GM12878 (cell line): ENCODE measurements at regions of chr11 and their contacts with region 1.

Region 1: GRCh38 chr11:72951193-72951592 is 137.0 kb downstream of the ATG16L2 start:
- DNase-seq: no peak
- ATAC-seq: no peak
- H3K4me3 ChIP-seq: no peak overlapping the region
- H3K27ac ChIP-seq: peak overlapping the region; percentile 48
- H3K4me1 ChIP-seq: peaks cover 26% of the 10 kb centered on the region
- H3K27me3 ChIP-seq: no peaks in the 10 kb centered on the region
- CTCF ChIP-seq: no peak
- EP300 ChIP-seq: no peak
- POLR2A ChIP-seq: no peak
- RAD21 ChIP-seq: no peak

Region 2: GRCh38 chr11:72962084-72962483 is 10.9 kb after region 1 on chr11:
- CTCF ChIA-PET with region 1: interaction called, 3 read pairs
- POLR2A ChIA-PET with region 1: no interaction called
- RAD21 ChIA-PET with region 1: no interaction called
- SMC1A ChIA-PET with region 1: interaction called, 11 read pairs
- in situ Hi-C with region 1: no loop called
- intact Hi-C with region 1: no loop called
- DNase-seq: no peak
- ATAC-seq: no peak
- H3K4me3 ChIP-seq: no peak overlapping the region
- H3K27ac ChIP-seq: no peak overlapping the region
- H3K4me1 ChIP-seq: no peaks in the 10 kb centered on the region
- H3K27me3 ChIP-seq: no peaks in the 10 kb centered on the region
- CTCF ChIP-seq: no peak
- EP300 ChIP-seq: no peak
- POLR2A ChIP-seq: no peak
- RAD21 ChIP-seq: no peak

Region 3: DNA sequence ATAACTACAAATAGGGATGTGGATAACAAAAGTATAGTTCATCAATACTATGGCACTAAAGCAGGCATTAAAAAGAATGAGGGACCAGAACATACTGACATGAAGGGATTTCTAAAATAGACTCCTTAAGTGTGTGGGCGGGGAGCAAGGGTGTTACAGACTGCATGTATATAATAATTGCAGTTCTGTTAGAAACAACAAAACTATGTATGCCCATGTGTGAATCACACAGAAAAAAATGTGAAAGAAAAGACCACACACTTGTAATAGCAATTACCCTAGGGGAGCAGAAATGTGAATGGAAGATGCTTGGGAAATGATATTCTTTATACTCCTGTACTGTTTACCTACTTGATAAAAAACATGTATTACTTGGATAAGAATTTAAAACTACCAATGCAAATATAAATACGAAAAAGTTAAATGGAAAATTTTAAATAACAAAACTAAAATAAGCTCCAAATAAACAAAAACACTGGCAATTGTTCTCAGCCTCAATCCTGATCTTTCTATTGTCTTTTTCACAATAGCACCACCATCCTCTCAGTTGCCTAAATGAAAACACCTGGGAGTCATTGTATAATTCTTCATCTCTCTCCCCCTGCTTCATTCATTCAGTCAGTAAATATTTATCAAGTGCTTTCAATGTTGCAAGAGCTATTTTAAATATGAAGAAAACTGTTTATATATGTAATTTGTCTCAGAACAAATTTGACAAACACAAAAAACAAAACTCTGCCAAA is 61.1 kb after region 1 on chr11:
- CTCF ChIA-PET with region 1: no interaction called
- POLR2A ChIA-PET with region 1: no interaction called
- RAD21 ChIA-PET with region 1: no interaction called
- SMC1A ChIA-PET with region 1: no interaction called
- in situ Hi-C with region 1: no loop called
- intact Hi-C with region 1: no loop called
- DNase-seq: no peak
- ATAC-seq: no peak
- H3K4me3 ChIP-seq: no peak overlapping the region
- H3K27ac ChIP-seq: no peak overlapping the region
- H3K4me1 ChIP-seq: no peaks in the 10 kb centered on the region
- H3K27me3 ChIP-seq: no peaks in the 10 kb centered on the region
- CTCF ChIP-seq: no peak
- EP300 ChIP-seq: no peak
- POLR2A ChIP-seq: no peak
- RAD21 ChIP-seq: no peak